GM12878 (cell line): ENCODE measurements at regions of chr3 and their contacts with region 1.

Region 1: GRCh38 chr3:101950510-101950909 is 101.2 kb downstream of the NFKBIZ start:
- DNase-seq: peak; percentile 87
- ATAC-seq: peak; percentile 92
- H3K4me3 ChIP-seq: no peak overlapping the region
- H3K27ac ChIP-seq: no peak overlapping the region
- H3K4me1 ChIP-seq: no peaks in the 10 kb centered on the region
- H3K27me3 ChIP-seq: no peaks in the 10 kb centered on the region
- CTCF ChIP-seq: no peak
- EP300 ChIP-seq: peak in 1 of 2 experiments; percentile 49; a peak in 1 of 4 replicates
- POLR2A ChIP-seq: no peak
- RAD21 ChIP-seq: no peak

Region 2: DNA sequence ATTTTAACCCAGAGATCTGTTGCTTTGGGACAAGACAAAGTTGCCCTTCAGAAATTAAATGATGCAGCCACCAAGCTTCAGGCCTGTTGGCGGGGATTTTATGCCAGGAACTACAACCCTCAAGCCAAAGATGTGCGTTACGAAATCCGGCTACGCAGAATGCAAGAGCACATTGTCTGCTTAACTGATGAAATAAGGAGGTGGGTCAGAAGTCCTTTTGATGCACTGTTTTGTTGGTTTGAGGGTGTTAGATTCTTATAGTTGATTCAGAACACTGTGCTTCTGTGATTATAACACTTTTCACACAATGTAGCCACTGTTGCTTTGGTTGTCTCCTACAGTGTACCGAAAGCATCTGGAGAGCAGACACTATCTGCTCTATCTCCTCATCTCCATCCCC is 192.3 kb before region 1 on chr3:
- CTCF ChIA-PET with region 1: no interaction called
- POLR2A ChIA-PET with region 1: no interaction called
- RAD21 ChIA-PET with region 1: no interaction called
- SMC1A ChIA-PET with region 1: no interaction called
- in situ Hi-C with region 1: no loop called
- intact Hi-C with region 1: no loop called
- DNase-seq: no peak
- ATAC-seq: no peak
- H3K4me3 ChIP-seq: no peak overlapping the region
- H3K27ac ChIP-seq: no peak overlapping the region
- H3K4me1 ChIP-seq: no peaks in the 10 kb centered on the region
- H3K27me3 ChIP-seq: no peaks in the 10 kb centered on the region
- CTCF ChIP-seq: no peak
- EP300 ChIP-seq: no peak
- POLR2A ChIP-seq: no peak
- RAD21 ChIP-seq: no peak

Region 3: GRCh38 chr3:101963902-101964362 is 13.4 kb after region 1 on chr3:
- CTCF ChIA-PET with region 1: interaction called, 10 read pairs
- POLR2A ChIA-PET with region 1: interaction called, 3 read pairs
- RAD21 ChIA-PET with region 1: interaction called, 4 read pairs
- SMC1A ChIA-PET with region 1: interaction called, 14 read pairs
- in situ Hi-C with region 1: no loop called
- intact Hi-C with region 1: no loop called
- DNase-seq: no peak
- ATAC-seq: peak; percentile 33; the same call in 2 of the 3 replicates
- H3K4me3 ChIP-seq: no peak overlapping the region
- H3K27ac ChIP-seq: no peak overlapping the region
- H3K4me1 ChIP-seq: no peaks in the 10 kb centered on the region
- H3K27me3 ChIP-seq: no peaks in the 10 kb centered on the region
- CTCF ChIP-seq: no peak
- EP300 ChIP-seq: no peak
- POLR2A ChIP-seq: no peak
- RAD21 ChIP-seq: no peak

Region 4: GRCh38 chr3:101988591-101988990 is 38.1 kb after region 1 on chr3:
- CTCF ChIA-PET with region 1: no interaction called
- POLR2A ChIA-PET with region 1: interaction called, 3 read pairs
- RAD21 ChIA-PET with region 1: interaction called, 4 read pairs
- SMC1A ChIA-PET with region 1: interaction called, 16 read pairs
- in situ Hi-C with region 1: no loop called
- intact Hi-C with region 1: loop called (anchors 1 kb)
- DNase-seq: no peak
- ATAC-seq: peak; percentile 65
- H3K4me3 ChIP-seq: no peak overlapping the region
- H3K27ac ChIP-seq: peak overlapping the region; percentile 59
- H3K4me1 ChIP-seq: peaks cover 28% of the 10 kb centered on the region
- H3K27me3 ChIP-seq: no peaks in the 10 kb centered on the region
- CTCF ChIP-seq: no peak
- EP300 ChIP-seq: 0 out of 4 replicates have a peak, but pooled peaks of 1 of the 2 experiments have one; percentile 30
- POLR2A ChIP-seq: no peak
- RAD21 ChIP-seq: no peak

Region 5: DNA sequence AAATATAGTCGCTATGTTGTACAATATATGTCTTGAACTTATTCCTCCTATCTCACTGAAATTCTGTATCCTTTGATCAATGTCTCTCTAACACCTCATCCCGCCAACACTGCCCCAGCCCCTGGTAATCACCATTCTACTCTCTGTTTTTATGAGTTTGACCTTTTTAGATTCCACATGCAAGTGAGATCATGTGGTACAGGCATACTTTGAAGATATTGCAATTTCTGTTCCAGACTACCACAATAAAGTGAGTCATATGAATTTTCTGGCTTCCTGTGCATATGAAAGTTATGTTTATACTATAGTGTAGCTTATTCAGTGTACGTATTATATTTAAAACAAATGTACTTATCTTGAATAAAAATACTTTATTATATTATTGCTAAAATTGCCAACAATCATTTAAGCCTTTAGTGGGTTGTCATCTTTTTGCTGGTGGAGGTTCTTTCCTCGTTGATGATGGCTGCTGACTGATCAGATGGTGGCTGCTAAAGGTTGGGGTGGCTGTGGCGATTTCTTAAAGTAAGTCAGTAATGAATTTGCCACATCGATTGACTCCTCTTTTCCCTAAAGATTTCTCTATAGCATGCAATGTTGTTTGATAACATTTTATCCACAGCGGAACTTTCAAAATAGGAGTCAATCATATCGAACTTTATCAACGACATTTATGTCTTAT is 156.0 kb after region 1 on chr3:
- CTCF ChIA-PET with region 1: no interaction called
- POLR2A ChIA-PET with region 1: no interaction called
- RAD21 ChIA-PET with region 1: no interaction called
- SMC1A ChIA-PET with region 1: no interaction called
- in situ Hi-C with region 1: no loop called
- intact Hi-C with region 1: no loop called
- DNase-seq: no peak
- ATAC-seq: no peak
- H3K4me3 ChIP-seq: no peak overlapping the region
- H3K27ac ChIP-seq: no peak overlapping the region
- H3K4me1 ChIP-seq: no peaks in the 10 kb centered on the region
- H3K27me3 ChIP-seq: no peaks in the 10 kb centered on the region
- CTCF ChIP-seq: no peak
- EP300 ChIP-seq: no peak
- POLR2A ChIP-seq: no peak
- RAD21 ChIP-seq: no peak